Aorta (tissue), 5 donors: ENCODE measurements at regions of chr18 and their contacts with region 1.

Region 1: DNA sequence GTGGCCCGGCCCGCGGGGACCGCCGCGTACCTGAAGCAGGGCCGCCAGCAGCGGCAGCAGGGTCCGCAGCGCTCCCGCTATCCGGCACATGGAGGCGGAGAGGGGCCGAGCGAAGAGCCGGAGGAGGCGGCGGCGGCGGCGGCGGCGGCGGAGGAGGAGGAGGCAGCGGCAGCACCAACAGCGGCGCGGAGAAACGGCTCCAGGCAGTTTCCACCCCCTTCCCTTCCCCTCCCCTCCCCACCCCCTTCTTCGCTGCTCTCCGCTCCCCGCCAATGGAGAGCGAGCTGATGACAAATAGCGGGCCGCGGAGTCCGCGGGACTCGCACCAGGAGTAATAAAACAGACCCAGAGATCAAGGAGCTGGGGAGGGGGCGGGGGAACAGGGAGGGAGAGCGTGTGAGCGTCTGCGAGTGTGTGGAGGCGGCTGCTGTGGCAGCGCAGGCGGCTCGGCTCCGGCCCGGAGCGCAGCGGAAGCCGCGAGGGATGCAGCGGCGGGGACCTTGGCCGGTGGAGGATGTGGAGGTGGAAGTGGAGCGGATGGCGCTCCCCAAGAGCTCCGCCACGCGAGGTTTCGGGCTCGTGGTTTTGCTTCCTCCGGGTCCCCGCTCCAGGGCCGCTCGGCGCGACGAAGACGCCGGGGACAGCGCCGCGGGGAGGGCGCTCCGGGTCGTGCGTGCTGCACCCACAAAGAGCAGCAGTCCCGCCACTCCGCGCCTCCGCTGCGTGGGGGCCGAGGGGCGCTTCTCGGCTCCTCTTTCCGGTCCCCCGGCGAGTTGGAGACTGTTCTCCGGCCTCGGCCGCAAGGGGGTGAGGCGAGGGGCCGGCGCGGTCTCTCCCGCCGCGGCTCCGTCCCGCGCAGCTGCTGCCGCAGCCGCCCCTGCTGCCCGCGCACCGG is at the start of gene CDH2:
- DNase-seq: peak; percentile 69 to 77
- ATAC-seq: peak; percentile 64
- H3K4me3 ChIP-seq: peak within 1 kb of the TSS; percentile 64 to 81
- H3K27ac ChIP-seq: peak within 1 kb of the TSS; percentile 53 to 83
- H3K4me1 ChIP-seq: no peaks in the 10 kb centered on the region
- H3K27me3 ChIP-seq: no peaks in the 10 kb centered on the region
- total RNA-seq, gene CDH2: 6.9 to 10.1 TPM

Region 2: DNA sequence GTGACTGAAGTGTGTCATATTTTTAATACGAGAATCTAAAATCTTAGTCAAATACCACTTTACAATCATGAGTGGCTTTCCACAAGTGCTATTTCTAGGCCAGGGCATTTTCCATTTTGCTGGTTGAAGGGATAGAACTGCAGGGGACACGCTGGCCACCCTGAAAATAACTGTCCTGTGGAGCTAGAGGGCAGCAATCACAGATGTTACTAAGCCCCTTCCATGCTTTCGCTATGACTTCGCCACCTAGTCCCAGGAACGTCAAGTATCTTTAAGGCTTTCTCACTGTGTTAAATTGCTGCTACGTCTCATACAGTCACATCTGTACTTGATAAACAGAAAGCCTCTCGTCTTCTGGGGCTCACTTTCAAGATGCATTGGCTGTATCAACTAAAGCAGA is 172.0 kb before region 1 on chr18:
- intact Hi-C with region 1: loop called in 1 of 2 experiments (anchors 2 kb)
- DNase-seq: no peak
- ATAC-seq: no peak
- H3K4me3 ChIP-seq: no peak overlapping the region
- H3K27ac ChIP-seq: no peak overlapping the region
- H3K4me1 ChIP-seq: no peaks in the 10 kb centered on the region
- H3K27me3 ChIP-seq: no peaks in the 10 kb centered on the region